ENCODE measurements at regions of chr3 and their contacts with region 1.

Region 1: DNA sequence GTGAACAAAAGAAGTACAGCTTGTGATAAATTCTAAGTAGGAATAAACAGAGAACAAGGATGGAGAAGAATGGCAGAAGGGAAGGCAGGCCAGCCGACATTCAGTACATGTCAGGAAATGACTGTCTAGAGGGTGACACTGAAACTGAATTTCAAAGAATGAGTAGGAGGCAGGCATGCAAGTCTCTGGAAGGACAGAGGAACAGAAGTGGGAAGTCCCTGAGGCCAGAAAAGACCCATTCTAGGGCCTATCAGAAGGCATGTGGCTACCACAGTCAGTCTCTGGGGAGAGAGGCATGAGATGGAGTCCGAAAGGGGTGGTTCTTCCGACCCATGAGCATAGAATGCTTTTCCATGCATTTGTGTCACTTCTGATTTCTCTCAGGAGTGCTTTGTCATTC is 243.5 kb upstream of the UBE2E2 start:
- DNase-seq: no peak
- ATAC-seq: peak; percentile 25

Region 2: GRCh38 chr3:22175947-22176346 is 783.6 kb before region 1 on chr3:
- intact Hi-C with region 1: loop called (anchors 10 kb)
- DNase-seq: no peak
- ATAC-seq: no peak

Region 3: GRCh38 chr3:22582162-22582714 is 377.4 kb before region 1 on chr3:
- intact Hi-C with region 1: loop called (anchors 10 kb)
- DNase-seq: no peak
- ATAC-seq: no peak

Region 4: DNA sequence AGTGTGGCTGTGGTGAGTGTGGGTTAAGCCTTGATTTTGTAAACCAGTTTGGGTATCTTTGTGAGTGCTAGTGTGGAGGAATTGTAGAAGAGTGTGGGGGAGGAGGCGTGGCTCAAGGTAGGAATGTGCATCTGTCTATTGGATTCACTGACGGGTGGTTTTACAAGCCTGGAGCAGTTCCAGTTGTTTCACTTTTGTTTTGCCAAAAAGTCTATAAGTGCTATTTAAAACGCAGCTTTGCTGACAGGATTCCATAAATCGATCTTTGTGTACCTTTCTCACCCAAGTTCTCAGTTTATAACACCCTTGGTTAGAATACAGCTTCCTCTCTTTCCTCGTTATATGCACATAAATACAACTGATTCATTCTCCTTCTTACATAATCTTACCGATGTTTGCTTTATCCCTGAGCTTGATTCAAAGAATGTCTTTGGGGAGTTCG is 120.4 kb after region 1 on chr3:
- intact Hi-C with region 1: no loop called
- DNase-seq: no peak
- ATAC-seq: no peak

Region 5: DNA sequence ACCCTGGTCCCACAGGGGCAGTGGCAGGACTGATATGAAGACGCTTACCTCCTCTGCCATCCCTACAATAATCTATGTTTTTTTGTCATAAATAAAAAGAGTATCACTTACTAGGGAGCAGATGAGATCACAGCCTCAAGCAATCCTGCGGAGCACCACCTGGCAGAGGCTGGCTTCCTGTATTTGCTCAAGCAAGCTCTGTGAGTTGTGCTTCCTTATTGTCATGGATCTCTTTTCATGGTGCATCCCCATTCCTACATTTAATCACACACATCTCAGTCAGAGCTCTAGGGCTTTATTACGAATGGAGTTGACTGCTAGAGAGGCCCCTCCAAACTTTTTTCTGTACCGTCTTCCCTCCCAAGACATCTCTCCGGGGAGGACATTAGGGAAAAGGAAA is 429.5 kb after region 1 on chr3:
- intact Hi-C with region 1: no loop called
- DNase-seq: no peak
- ATAC-seq: no peak

Region 6: DNA sequence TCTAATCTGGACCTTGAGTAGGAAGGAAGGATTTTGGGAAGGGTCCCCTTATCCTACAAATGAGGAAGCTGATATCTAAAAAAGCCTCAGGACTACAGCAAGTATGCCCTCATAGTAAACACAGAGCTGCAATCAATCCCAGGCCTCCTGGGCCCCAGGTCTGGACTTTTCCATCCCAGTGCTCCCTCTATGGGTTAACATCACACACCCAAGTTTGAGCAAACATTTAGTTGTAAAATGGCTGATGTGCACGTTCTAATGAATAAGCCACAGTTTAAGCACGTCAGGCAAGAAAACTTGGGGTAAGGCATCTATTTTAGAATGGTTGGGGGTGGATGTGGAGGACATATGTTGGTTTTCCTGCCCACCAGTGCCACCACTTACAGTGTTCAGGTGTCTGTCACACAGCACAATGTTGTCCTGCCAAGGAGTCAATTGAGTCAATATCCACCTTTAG is 801.9 kb after region 1 on chr3:
- intact Hi-C with region 1: no loop called
- DNase-seq: no peak
- ATAC-seq: peak; percentile 50